B cell (primary cell): ENCODE measurements at regions of chr19 and their contacts with region 1.

Region 1: DNA sequence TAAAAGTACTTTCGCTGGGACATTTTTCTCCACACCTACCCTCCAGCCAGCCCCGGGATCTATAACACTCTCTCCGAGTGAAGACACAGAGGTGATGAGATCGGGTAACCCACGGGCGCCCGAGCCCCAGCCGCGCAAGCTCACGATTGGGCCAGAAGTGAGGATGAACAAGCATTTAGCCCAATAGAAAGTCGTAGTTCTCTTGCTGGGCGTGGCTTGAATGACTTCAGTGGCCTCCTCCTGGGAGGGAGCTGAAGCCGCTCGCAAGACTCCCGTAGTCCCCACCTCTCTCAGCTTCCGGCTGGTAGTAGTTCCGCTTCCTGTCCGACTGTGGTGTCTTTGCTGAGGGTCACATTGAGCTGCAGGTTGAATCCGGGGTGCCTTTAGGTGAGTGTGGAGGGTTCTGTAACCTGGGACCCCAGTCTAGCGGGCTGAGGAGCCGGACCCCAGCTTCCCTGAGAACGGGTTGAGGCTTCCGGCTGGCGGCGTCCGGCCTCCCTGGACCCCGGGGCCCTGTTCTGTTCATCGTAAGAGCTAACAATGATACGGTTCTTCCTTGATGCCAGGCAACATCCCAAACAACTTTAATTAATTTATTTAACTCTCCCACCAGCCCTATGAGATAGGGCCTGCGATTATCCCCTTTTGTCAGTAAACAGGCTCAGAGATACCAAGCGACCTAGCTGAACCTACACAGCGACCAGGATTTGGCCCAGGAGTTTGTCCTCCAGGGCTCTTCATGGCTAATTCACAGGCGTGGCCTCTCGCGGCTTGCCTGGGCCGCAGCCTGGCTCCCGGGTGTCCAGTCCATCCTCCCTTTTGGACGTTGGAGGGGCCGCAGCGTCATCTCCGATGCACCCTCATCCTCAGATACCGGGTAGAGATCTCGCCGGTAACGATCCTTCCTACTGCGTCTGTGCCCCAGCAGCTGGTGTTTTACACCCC is at the start of gene COX6B1:
- DNase-seq: peak; percentile 96
- ATAC-seq: peak; percentile 65
- H3K4me3 ChIP-seq: peak within 1 kb of the TSS; percentile 69 to 88 (median 85)
- H3K4me3 Mint-ChIP-seq: peak within 1 kb of the TSS; percentile 94
- H3K27ac ChIP-seq: peak within 1 kb of the TSS; percentile 64 to 80
- H3K27ac Mint-ChIP-seq: peak within 1 kb of the TSS; percentile 87
- H3K4me1 ChIP-seq: peaks cover 14 to 43% of the 10 kb centered on the region in 2 donors
- H3K4me1 Mint-ChIP-seq: peaks cover 44% of the 10 kb centered on the region
- H3K27me3 ChIP-seq: no peaks in the 10 kb centered on the region
- H3K27me3 Mint-ChIP-seq: no peaks in the 10 kb centered on the region
- CTCF ChIP-seq: no peak
- total RNA-seq, gene COX6B1: 214 and 215 TPM in 2 replicates

Region 2: DNA sequence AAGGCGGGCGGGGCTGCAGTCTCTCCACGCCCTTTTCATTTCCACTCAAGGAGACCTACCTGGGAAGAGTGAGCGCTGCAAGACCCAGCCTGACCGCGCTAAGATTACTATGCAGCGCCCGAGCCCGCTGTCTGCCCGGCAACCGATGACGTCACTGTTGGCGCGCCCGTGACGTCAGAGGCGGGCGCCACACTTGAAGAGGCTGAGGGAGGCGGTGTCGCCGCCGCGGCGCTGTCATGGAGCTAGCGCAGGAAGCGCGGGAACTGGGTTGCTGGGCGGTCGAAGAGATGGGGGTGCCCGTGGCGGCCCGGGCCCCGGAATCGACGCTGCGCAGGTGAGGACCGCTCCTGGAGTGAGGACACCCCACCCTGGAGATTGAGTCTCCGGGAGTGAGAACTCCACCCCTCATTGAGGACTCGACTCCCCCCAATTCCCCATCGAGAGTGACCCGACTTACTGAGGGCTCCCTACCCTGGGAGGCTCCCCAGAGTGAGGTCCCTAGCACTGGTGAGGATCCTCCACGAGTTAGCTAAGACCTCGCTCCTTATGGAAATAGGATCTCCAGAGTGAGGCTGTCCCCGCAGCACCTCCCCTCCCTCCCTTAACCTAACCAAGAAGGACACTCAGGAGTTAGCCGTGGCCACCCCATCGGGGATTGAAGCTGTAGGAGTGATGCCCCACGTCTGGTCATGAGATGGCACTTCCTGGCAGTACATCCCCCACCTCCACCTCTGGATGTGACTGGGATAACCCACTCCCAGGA is 35.5 kb before region 1 on chr19 and contains the start of gene HAUS5:
- CTCF ChIA-PET with region 1: no interaction called
- POLR2A ChIA-PET with region 1: interaction called, 5 read pairs
- intact Hi-C with region 1: loop called (anchors 1 kb)
- DNase-seq: peak; percentile 97
- ATAC-seq: peak; percentile 79
- H3K4me3 ChIP-seq: peak within 1 kb of the TSS; percentile 37 to 87 (median 78)
- H3K4me3 Mint-ChIP-seq: peak within 1 kb of the TSS; percentile 92
- H3K27ac ChIP-seq: peak within 1 kb of the TSS; percentile 76 to 77
- H3K27ac Mint-ChIP-seq: peak within 1 kb of the TSS; percentile 98
- H3K4me1 ChIP-seq: peaks cover 38 to 53% of the 10 kb centered on the region in 2 donors
- H3K4me1 Mint-ChIP-seq: peaks cover 42% of the 10 kb centered on the region
- H3K27me3 ChIP-seq: no peaks in the 10 kb centered on the region
- H3K27me3 Mint-ChIP-seq: no peaks in the 10 kb centered on the region
- CTCF ChIP-seq: no peak
- total RNA-seq, gene HAUS5: 32.2 and 35.3 TPM in 2 replicates

Region 3: GRCh38 chr19:35702223-35703012 is 54.1 kb after region 1 on chr19:
- CTCF ChIA-PET with region 1: interaction called, 6 read pairs
- POLR2A ChIA-PET with region 1: interaction called, 3 read pairs
- intact Hi-C with region 1: loop called (anchors 1 kb)
- DNase-seq: peak; percentile 96
- ATAC-seq: peak; percentile 99
- H3K4me3 ChIP-seq: peak overlapping the region in 4 of 5 experiments; percentile 61 to 86 (median 74)
- H3K4me3 Mint-ChIP-seq: peak overlapping the region; percentile 98
- H3K27ac ChIP-seq: peak overlapping the region; percentile 59 to 74
- H3K27ac Mint-ChIP-seq: peak overlapping the region; percentile 98
- H3K4me1 ChIP-seq: peaks cover 0 to 19% of the 10 kb centered on the region in 2 donors
- H3K4me1 Mint-ChIP-seq: peaks cover 8% of the 10 kb centered on the region
- H3K27me3 ChIP-seq: no peaks in the 10 kb centered on the region
- H3K27me3 Mint-ChIP-seq: no peaks in the 10 kb centered on the region
- CTCF ChIP-seq: no peak

Region 4: GRCh38 chr19:35748106-35749020 is 100.1 kb after region 1 on chr19 and contains the start of gene LIN37:
- CTCF ChIA-PET with region 1: no interaction called
- POLR2A ChIA-PET with region 1: interaction called, 7 read pairs
- intact Hi-C with region 1: loop called (anchors 1 kb)
- DNase-seq: peak; percentile 99
- ATAC-seq: peak; percentile 71
- H3K4me3 ChIP-seq: peak within 1 kb of the TSS; percentile 65 to 99 (median 74)
- H3K4me3 Mint-ChIP-seq: peak within 1 kb of the TSS; percentile 99
- H3K27ac ChIP-seq: peak within 1 kb of the TSS; percentile 63 to 92
- H3K27ac Mint-ChIP-seq: peak within 1 kb of the TSS; percentile 97
- H3K4me1 ChIP-seq: peaks cover 30 to 38% of the 10 kb centered on the region in 2 donors
- H3K4me1 Mint-ChIP-seq: peaks cover 49% of the 10 kb centered on the region
- H3K27me3 ChIP-seq: no peaks in the 10 kb centered on the region
- H3K27me3 Mint-ChIP-seq: no peaks in the 10 kb centered on the region
- CTCF ChIP-seq: no peak
- total RNA-seq, gene LIN37: 22.3 and 22.8 TPM in 2 replicates

Region 5: GRCh38 chr19:35759697-35760096 is 111.4 kb after region 1 on chr19:
- CTCF ChIA-PET with region 1: no interaction called
- POLR2A ChIA-PET with region 1: no interaction called
- intact Hi-C with region 1: no loop called
- DNase-seq: no peak
- ATAC-seq: no peak
- H3K4me3 ChIP-seq: no peak overlapping the region
- H3K4me3 Mint-ChIP-seq: peak overlapping the region; percentile 99
- H3K27ac ChIP-seq: no peak overlapping the region
- H3K27ac Mint-ChIP-seq: no peak overlapping the region
- H3K4me1 ChIP-seq: peaks cover 24 to 35% of the 10 kb centered on the region in 2 donors
- H3K4me1 Mint-ChIP-seq: peaks cover 33% of the 10 kb centered on the region
- H3K27me3 ChIP-seq: peaks cover 0 to 23% (median 10%) of the 10 kb centered on the region in 4 experiments
- H3K27me3 Mint-ChIP-seq: peaks cover 13% of the 10 kb centered on the region
- CTCF ChIP-seq: no peak

Region 6: GRCh38 chr19:36114763-36115452 is 466.6 kb after region 1 on chr19 and contains the start of gene POLR2I:
- CTCF ChIA-PET with region 1: no interaction called
- POLR2A ChIA-PET with region 1: no interaction called
- intact Hi-C with region 1: loop called (anchors 10 kb)
- DNase-seq: peak; percentile 100
- ATAC-seq: peak; percentile 87
- H3K4me3 ChIP-seq: peak within 1 kb of the TSS; percentile 76 to 91 (median 79)
- H3K4me3 Mint-ChIP-seq: peak within 1 kb of the TSS; percentile 95
- H3K27ac ChIP-seq: peak within 1 kb of the TSS; percentile 84 to 90
- H3K27ac Mint-ChIP-seq: peak within 1 kb of the TSS; percentile 99
- H3K4me1 ChIP-seq: peaks cover 16 to 23% of the 10 kb centered on the region in 2 donors
- H3K4me1 Mint-ChIP-seq: peaks cover 40% of the 10 kb centered on the region
- H3K27me3 ChIP-seq: no peaks in the 10 kb centered on the region
- H3K27me3 Mint-ChIP-seq: no peaks in the 10 kb centered on the region
- CTCF ChIP-seq: no peak
- total RNA-seq, gene POLR2I: 28.2 and 33.4 TPM in 2 replicates